Transverse colon (tissue), 4 donors: ENCODE measurements at regions of chr4 and their contacts with region 1.

Region 1: DNA sequence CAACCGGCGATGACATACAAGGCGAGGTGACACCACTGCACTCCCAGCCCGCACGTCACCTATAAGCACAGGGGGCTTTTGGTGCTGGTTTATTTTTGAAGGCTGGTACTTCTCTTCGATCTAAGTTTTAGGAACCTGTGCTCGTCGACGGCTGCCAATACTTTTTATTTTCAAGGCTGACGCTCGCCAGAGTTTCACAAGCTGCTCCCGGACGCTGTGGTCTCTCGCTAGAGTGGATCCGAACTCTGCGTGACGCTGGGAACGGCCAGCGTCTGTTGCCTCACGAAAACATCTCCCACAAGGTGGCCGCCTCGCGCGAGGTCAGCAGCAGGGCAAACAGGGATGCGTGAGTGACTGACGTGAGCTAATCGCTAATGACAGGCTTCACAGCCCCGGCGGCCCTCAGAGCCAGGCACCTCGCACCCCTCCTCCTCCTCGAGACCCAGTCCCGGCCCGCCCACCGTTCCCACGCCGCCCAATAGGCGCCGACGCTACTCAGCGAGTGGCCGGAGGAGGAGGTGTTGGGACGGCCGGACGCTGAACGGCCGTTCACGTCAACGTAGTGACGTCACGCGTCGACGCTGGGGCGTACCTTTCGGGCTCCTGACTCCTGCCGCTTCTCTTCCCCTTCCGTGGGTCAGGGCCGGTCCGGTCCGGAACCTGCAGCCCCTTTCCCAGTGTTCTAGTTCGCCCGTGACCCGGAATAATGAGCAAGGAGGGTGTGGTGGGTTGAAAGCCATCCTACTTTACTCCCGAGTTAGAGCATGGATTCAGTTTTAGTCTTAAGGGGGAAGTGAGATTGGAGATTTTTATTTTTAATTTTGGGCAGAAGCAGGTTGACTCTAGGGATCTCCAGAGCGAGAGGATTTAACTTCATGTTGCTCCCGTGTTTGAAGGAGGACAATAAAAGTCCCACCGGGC is at the start of gene CLCN3:
- DNase-seq: peak; percentile 98
- H3K4me3 ChIP-seq: peak within 1 kb of the TSS; percentile 57 to 69 (median 61)
- H3K27ac ChIP-seq: peak within 1 kb of the TSS; percentile 92 to 97 (median 96)
- H3K4me1 ChIP-seq: peaks cover 4 to 38% (median 27%) of the 10 kb centered on the region in 4 donors
- H3K27me3 ChIP-seq: no peaks in the 10 kb centered on the region
- CTCF ChIP-seq: peak in 1 of 5 experiments; percentile 41
- EP300 ChIP-seq: peak; percentile 51
- POLR2A ChIP-seq: peak; percentile 96
- total RNA-seq, gene CLCN3: 46.8 to 91.1 (median 69.3) TPM

Region 2: GRCh38 chr4:167811958-167812357 is 1808.3 kb before region 1 on chr4:
- in situ Hi-C with region 1: no loop called
- intact Hi-C with region 1: no loop called
- DNase-seq: no peak
- H3K4me3 ChIP-seq: no peak overlapping the region
- H3K27ac ChIP-seq: no peak overlapping the region
- H3K4me1 ChIP-seq: no peaks in the 10 kb centered on the region
- H3K27me3 ChIP-seq: no peaks in the 10 kb centered on the region
- CTCF ChIP-seq: no peak
- EP300 ChIP-seq: no peak
- POLR2A ChIP-seq: no peak

Region 3: GRCh38 chr4:169659716-169660670 is 39.8 kb after region 1 on chr4:
- in situ Hi-C with region 1: loop called in 1 of 4 experiments (anchors 10 kb)
- intact Hi-C with region 1: loop called (anchors 5 kb)
- DNase-seq: peak; percentile 78
- H3K4me3 ChIP-seq: peak overlapping the region; percentile 4 to 52 (median 36)
- H3K27ac ChIP-seq: peak overlapping the region; percentile 84 to 93 (median 88)
- H3K4me1 ChIP-seq: peaks cover 8 to 79% (median 60%) of the 10 kb centered on the region in 4 donors
- H3K27me3 ChIP-seq: no peaks in the 10 kb centered on the region
- CTCF ChIP-seq: no peak
- EP300 ChIP-seq: no peak
- POLR2A ChIP-seq: peak; percentile 77

Region 4: DNA sequence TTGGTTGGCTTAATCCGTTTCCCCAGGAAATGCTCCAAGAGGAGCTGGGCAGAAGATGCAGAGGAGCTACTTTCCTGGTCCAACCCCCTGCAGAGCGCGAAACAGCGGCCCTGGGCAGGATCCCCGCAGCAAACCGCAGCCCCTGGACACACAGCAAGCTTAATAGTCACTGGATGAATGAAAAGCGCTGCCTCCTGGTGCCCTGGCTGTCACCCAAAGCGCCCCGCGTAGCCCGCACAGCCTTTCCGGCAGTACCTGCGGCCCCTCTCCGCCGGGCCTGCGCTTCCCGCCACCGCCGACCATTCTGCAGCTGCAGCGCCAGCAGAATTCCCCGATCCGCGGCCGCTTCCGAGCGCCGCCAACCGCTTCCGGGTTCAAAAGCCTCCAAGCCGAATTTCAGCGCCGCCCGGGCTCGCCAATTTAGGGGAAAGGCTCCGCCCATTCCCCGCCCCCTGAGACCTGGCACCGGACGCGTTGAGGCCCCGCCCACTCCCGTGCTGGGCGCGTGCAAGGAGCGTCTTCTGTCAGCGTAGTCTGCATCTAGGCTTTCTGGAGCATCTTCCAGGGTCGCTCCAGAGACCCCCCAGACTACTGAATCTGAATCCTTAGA is 137.5 kb after region 1 on chr4 and contains the start of gene HPF1:
- in situ Hi-C with region 1: loop called (anchors 10 to 25 kb)
- intact Hi-C with region 1: loop called (anchors 10 kb)
- DNase-seq: peak; percentile 97
- H3K4me3 ChIP-seq: peak within 1 kb of the TSS; percentile 56 to 96 (median 70)
- H3K27ac ChIP-seq: peak within 1 kb of the TSS; percentile 78 to 83 (median 80)
- H3K4me1 ChIP-seq: peaks cover 9 to 17% (median 14%) of the 10 kb centered on the region in 4 donors
- H3K27me3 ChIP-seq: peaks cover 3% of the 10 kb centered on the region
- CTCF ChIP-seq: no peak
- EP300 ChIP-seq: no peak
- POLR2A ChIP-seq: peak; percentile 43
- total RNA-seq, gene HPF1: 14.1 to 139 (median 35.1) TPM